Left lung (tissue), 14 donors: ENCODE measurements at regions of chr1 and their contacts with region 1.

Region 1: GRCh38 chr1:107782217-107782845 is 182.6 kb downstream of the VAV3 start:
- DNase-seq: peak in 2 of 4 donors; percentile 54 to 74
- ATAC-seq: peak; percentile 84
- H3K4me3 ChIP-seq: no peak overlapping the region
- H3K27ac ChIP-seq: peak overlapping the region in 1 of 2 donors; percentile 41
- H3K4me1 ChIP-seq: peaks cover 0 to 21% of the 10 kb centered on the region in 2 donors
- H3K27me3 ChIP-seq: no peaks in the 10 kb centered on the region
- CTCF ChIP-seq: peak; percentile 67 to 69

Region 2: DNA sequence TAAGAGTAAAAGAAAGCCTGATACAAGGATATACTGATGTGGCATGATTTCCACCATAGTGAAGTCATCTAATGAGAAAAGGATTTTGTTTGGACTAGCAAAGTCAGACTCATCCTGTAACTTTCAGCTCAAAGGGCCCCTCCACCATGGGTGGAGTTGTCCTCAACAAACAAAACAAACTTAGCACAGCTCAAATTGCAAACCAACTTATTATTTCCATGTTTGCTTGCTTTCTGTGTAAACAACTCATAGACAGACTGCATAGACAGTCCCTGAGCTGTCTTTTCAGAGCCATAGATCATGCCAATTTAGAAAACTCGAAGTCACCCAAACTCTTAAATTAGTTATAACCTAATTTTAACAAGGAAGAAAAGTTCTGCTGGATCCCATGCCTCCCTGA is 252.1 kb after region 1 on chr1:
- intact Hi-C with region 1: no loop called
- DNase-seq: no peak
- ATAC-seq: no peak
- H3K4me3 ChIP-seq: no peak overlapping the region
- H3K27ac ChIP-seq: no peak overlapping the region
- H3K4me1 ChIP-seq: no peaks in the 10 kb centered on the region
- H3K27me3 ChIP-seq: no peaks in the 10 kb centered on the region
- CTCF ChIP-seq: no peak

Region 3: DNA sequence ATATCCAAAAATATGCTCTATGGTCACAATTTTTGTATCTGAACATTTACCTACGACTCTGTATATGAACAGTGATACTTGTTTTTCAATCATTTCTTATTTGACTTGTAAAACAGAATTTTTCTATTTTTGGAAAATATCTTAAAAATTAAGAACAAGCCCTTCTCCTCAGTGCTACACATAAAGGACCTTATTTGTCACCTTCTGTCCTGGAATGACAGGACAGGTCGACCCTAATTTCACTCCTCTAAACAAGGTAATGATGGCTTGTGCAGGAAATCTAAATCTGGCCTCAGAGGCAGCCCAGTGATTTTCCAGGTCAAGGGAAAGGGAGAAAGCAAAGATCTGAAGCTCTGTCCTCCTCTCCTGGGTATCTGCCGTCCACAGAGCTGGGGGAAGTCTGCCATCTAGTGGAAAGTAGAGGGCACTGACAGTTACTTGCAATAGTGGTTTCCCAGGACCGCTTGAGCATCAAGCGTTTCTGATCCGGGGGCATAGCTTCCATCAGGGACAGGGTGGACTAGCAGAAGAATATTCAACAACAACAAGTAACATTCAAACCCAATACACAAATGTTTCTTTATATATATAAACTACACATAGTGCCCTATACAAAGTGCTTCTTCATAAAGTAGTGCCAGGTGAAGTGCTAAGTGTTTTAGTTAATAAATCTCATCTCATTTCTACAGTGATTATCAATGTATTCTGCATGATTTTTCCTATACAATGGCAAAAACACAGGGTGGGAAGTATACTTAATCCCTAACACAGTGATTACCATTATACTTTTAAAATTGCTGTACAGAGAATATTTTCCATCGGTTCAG is 343.2 kb after region 1 on chr1:
- intact Hi-C with region 1: loop called (anchors 2 to 10 kb)
- DNase-seq: peak in 3 of 4 donors; percentile 64 to 88 (median 73)
- ATAC-seq: peak; percentile 100
- H3K4me3 ChIP-seq: no peak overlapping the region
- H3K27ac ChIP-seq: no peak overlapping the region
- H3K4me1 ChIP-seq: peaks cover 0 to 4% of the 10 kb centered on the region in 2 donors
- H3K27me3 ChIP-seq: no peaks in the 10 kb centered on the region
- CTCF ChIP-seq: peak; percentile 84 to 87